ENCODE measurements at regions of chr5 and their contacts with region 1.

Region 1: GRCh38 chr5:126354012-126354857 is 69.0 kb upstream of the GRAMD2B start:
- DNase-seq: peak; percentile 43 to 97
- H3K4me3 ChIP-seq: peak overlapping the region; percentile 48; the same call in 1 of the 2 replicates
- H3K27ac ChIP-seq: peak overlapping the region; percentile 89
- H3K4me1 ChIP-seq: peaks cover 37% of the 10 kb centered on the region
- H3K27me3 ChIP-seq: no peaks in the 10 kb centered on the region
- CTCF ChIP-seq: peak; percentile 74

Region 2: DNA sequence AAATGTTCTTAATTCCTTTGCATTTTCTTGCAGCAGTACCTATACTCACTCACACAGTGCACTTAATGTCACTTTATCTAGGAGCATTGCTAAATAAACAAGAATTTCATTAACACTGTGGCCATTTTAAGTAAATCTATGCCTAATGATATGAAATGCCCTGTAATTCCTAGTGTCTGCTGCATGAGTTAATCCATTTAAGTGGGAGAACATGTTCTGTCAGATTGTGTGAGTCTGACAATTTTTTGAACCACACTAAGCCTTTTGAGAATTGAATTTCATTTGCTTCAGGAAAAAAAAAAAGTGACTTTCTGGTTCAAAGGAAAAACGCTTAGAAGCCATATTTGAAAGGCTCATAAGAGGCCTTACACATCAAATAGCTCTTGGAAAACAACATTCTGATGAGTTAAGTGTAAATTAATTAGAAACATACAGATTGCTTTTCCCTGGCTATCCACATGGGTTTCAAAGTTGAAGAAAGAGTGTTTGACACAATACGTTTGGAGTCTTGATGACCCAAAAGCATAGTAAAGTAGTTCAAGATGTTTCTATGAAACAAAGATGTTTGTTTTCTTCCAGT is 377.7 kb before region 1 on chr5:
- CTCF ChIA-PET with region 1: no interaction called
- POLR2A ChIA-PET with region 1: no interaction called
- intact Hi-C with region 1: no loop called
- DNase-seq: no peak
- H3K4me3 ChIP-seq: no peak overlapping the region
- H3K27ac ChIP-seq: no peak overlapping the region
- H3K4me1 ChIP-seq: no peaks in the 10 kb centered on the region
- H3K27me3 ChIP-seq: no peaks in the 10 kb centered on the region
- CTCF ChIP-seq: no peak

Region 3: DNA sequence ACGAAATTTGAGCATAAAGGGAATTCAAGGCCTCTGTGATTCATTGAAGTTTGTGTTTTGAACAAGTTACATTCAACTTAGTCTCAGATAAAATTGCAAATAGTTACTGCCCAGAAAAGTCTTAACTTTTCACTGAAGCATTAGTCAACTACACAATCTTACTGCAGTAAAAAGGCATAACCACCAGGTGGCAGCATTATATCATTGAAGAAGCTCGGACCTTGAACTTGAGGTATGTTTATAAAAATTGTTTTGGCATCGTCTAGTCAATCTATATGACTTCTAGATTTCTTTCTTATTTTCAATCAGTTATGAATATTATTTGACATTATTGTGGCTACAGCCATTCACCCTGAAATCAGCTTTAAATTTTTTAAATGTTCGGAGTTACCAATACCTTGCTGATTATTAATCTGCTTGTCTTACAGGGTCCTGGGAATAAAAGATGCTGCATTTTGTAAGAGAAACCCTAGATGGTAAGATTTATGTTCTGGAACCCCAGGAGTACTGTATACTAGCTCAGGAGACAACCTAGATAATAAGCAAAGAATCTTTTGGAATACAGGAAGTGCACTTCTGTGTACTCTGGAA is 14.9 kb before region 1 on chr5:
- CTCF ChIA-PET with region 1: no interaction called
- POLR2A ChIA-PET with region 1: interaction called, 3 read pairs
- intact Hi-C with region 1: loop called (anchors 2 kb)
- DNase-seq: peak; percentile 30 to 50
- H3K4me3 ChIP-seq: no peak overlapping the region
- H3K27ac ChIP-seq: no peak overlapping the region
- H3K4me1 ChIP-seq: peaks cover 8% of the 10 kb centered on the region; the same call in 1 of the 2 replicates
- H3K27me3 ChIP-seq: no peaks in the 10 kb centered on the region
- CTCF ChIP-seq: peak; percentile 93

Region 4: DNA sequence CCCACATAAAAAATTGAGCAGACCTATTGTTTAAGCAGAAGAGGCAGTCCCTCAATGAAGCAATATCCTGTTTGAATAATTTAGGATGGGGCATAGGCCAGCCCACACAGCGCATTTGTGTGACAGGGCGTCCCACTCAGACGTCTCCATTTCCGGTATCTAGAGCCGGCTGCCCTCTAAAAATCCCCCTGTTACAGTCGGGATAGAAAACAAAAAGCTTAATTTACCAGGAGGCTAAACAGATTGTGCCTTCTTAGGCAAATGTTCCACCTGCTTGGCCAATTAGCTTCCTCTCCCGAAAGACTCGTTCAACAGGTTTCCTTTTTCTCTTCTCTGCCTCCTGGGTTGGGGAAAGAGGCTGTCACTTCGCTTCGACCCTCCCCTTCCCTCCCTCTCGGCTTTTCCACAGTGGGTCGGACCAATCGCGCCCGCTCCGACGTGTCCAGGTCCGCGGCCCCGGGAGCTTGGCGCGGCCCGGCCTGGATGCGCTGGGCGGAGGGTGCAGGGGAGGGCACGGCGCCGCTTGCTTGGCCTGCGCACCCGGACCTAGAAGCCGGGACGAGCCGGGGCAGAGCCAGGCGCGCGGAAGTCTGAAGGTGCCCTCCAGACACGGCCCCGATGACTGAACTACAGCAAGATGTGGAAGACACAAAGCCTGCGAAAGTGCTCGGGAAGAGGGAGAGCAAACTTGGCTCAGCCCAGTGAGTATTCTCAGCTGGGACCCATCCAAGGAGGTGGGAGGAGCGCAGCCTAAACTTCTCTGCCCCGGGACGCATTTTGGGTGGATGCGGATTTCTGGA is 69.0 kb after region 1 on chr5 and contains the start of gene GRAMD2B:
- CTCF ChIA-PET with region 1: interaction called, 3 read pairs
- POLR2A ChIA-PET with region 1: no interaction called
- intact Hi-C with region 1: loop called (anchors 1 kb)
- DNase-seq: peak; percentile 88 to 90
- H3K4me3 ChIP-seq: peak within 1 kb of the TSS; percentile 67
- H3K27ac ChIP-seq: peak within 1 kb of the TSS; percentile 60
- H3K4me1 ChIP-seq: peaks cover 26% of the 10 kb centered on the region
- H3K27me3 ChIP-seq: no peaks in the 10 kb centered on the region
- CTCF ChIP-seq: no peak
- total RNA-seq, gene GRAMD2B: 10.0 and 11.7 TPM in 2 replicates

Region 5: GRCh38 chr5:126536874-126537273 is 182.6 kb after region 1 on chr5:
- CTCF ChIA-PET with region 1: interaction called, 29 read pairs
- POLR2A ChIA-PET with region 1: interaction called, 3 read pairs
- intact Hi-C with region 1: loop called (anchors 1 kb)
- DNase-seq: no peak
- H3K4me3 ChIP-seq: no peak overlapping the region
- H3K27ac ChIP-seq: no peak overlapping the region
- H3K4me1 ChIP-seq: peaks cover 6% of the 10 kb centered on the region
- H3K27me3 ChIP-seq: no peaks in the 10 kb centered on the region
- CTCF ChIP-seq: no peak

Region 6: DNA sequence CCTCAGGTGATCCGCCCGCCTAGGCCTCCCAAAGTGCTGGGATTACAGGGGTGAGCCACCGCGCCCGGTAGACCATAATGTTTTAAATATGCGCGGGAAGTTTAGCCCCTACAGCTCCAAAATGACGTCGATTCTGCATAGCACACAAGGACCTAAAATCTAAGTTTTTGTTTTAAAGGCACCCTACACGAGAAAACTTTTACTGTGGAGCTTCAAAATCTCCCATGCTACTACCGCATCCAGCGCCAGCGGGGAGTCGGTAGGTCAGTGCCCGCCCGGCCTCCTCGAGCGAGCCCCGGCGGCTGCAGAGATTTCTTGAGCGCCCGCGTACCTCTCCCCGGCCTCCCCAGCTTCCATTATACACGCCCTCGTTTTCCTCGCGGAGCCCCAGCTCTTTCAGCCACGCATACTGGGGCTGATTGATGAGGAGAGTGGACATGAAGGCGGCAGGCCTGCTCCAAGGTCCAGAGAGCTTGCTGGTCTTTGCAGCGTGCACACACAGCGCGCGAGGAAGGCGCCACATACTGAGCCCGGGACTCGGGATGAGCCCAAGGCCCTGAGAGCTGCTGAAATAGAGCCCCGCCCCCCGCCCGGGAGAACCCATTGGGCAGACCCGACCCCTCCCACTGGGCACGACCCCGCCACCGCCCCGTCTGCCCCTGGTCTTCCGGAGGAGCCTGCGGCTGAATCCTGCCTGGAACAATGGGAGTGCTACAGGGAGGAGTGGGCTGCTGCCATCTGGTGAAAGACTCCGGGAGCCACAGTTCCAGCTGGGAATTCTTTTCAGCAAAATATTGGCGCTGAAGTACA is 240.6 kb after region 1 on chr5 and contains the start of gene ALDH7A1:
- CTCF ChIA-PET with region 1: no interaction called
- POLR2A ChIA-PET with region 1: interaction called, 4 read pairs
- intact Hi-C with region 1: loop called (anchors 5 kb)
- DNase-seq: peak; percentile 84 to 91
- H3K4me3 ChIP-seq: peak within 1 kb of the TSS; percentile 68
- H3K27ac ChIP-seq: peak within 1 kb of the TSS; percentile 45
- H3K4me1 ChIP-seq: peaks cover 20% of the 10 kb centered on the region
- H3K27me3 ChIP-seq: no peaks in the 10 kb centered on the region
- CTCF ChIP-seq: peak; percentile 54
- total RNA-seq, gene ALDH7A1: 109 and 111 TPM in 2 replicates